B cell (primary cell): ENCODE measurements at regions of chr1 and their contacts with region 1.

Region 1: DNA sequence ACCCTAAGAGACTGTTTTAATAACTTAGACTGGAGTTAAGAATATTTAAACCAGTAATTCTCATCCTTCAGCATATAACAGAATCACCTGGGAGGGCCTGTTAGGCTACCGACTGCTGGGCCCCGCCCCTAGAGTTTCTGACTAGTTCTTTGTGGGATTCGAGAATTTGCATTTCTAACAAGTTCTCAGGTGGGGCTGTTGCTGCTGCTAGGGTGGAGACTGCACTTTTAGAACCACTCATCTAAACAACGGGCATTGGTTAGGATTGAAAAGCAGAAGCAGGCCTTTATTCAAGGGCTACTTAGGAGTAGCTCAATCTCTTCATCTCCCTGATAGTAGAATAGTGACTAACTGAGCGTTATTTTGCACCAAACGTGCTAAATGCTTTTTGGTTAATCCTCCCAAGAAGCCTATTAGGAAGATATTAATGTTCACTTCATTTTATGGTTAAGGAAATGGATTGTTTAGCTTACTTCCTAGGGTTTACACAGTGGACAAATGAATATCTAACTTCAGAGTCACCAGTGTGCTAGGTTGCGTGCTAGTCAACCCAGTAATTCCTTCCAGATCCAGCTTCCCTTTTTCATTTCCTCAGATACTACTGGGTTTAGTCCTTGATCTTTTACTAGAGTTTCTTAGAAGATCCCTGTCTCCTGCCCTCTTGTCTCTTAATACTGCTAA is 31.1 kb upstream of the UAP1 start:
- DNase-seq: peak; percentile 81
- ATAC-seq: peak; percentile 93
- H3K4me3 ChIP-seq: no peak overlapping the region
- H3K4me3 Mint-ChIP-seq: no peak overlapping the region
- H3K27ac ChIP-seq: peak overlapping the region; percentile 59 to 77
- H3K27ac Mint-ChIP-seq: peak overlapping the region; percentile 69
- H3K4me1 ChIP-seq: peaks cover 17 to 20% of the 10 kb centered on the region in 2 donors
- H3K4me1 Mint-ChIP-seq: peaks cover 20% of the 10 kb centered on the region
- H3K27me3 ChIP-seq: no peaks in the 10 kb centered on the region
- H3K27me3 Mint-ChIP-seq: no peaks in the 10 kb centered on the region
- CTCF ChIP-seq: no peak

Region 2: GRCh38 chr1:162497723-162498500 is 32.5 kb before region 1 on chr1 and contains the start of gene UHMK1:
- CTCF ChIA-PET with region 1: no interaction called
- POLR2A ChIA-PET with region 1: no interaction called
- intact Hi-C with region 1: loop called (anchors 1 kb)
- DNase-seq: peak; percentile 94
- ATAC-seq: peak; percentile 95
- H3K4me3 ChIP-seq: peak within 1 kb of the TSS; percentile 71 to 95 (median 86)
- H3K4me3 Mint-ChIP-seq: peak within 1 kb of the TSS; percentile 98
- H3K27ac ChIP-seq: peak within 1 kb of the TSS; percentile 89 to 94
- H3K27ac Mint-ChIP-seq: peak within 1 kb of the TSS; percentile 96
- H3K4me1 ChIP-seq: peaks cover 15 to 16% of the 10 kb centered on the region in 2 donors
- H3K4me1 Mint-ChIP-seq: peaks cover 39% of the 10 kb centered on the region
- H3K27me3 ChIP-seq: no peaks in the 10 kb centered on the region
- H3K27me3 Mint-ChIP-seq: no peaks in the 10 kb centered on the region
- CTCF ChIP-seq: no peak
- total RNA-seq, gene UHMK1: 67.6 and 69.2 TPM in 2 replicates

Region 3: DNA sequence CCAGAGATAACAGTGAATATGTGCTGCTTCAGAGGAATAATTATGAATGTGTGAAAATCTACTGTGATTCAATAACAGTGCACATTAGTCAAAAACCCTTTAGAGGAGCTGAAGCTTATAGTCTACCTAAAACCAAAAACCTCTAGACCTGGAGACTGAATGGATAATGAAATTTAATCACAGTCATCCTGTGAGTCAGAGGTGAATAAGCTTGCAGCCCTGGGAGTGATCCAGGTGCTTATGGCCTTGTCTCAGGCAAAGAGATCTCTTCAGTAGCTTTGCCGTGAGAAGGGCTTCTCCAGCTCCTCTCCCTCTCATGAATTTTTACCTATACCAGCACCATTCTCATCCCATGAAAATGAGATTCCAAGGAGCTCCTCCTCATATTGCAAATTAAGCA is 457.4 kb after region 1 on chr1:
- CTCF ChIA-PET with region 1: no interaction called
- POLR2A ChIA-PET with region 1: no interaction called
- intact Hi-C with region 1: no loop called
- DNase-seq: no peak
- ATAC-seq: no peak
- H3K4me3 ChIP-seq: no peak overlapping the region
- H3K4me3 Mint-ChIP-seq: no peak overlapping the region
- H3K27ac ChIP-seq: no peak overlapping the region
- H3K27ac Mint-ChIP-seq: no peak overlapping the region
- H3K4me1 ChIP-seq: no peaks in the 10 kb centered on the region
- H3K4me1 Mint-ChIP-seq: no peaks in the 10 kb centered on the region
- H3K27me3 ChIP-seq: peaks cover 0 to 4% (median 0%) of the 10 kb centered on the region in 4 experiments
- H3K27me3 Mint-ChIP-seq: peaks cover 13% of the 10 kb centered on the region
- CTCF ChIP-seq: no peak